ENCODE measurements at regions of chr17 and their contacts with region 1.

Region 1: DNA sequence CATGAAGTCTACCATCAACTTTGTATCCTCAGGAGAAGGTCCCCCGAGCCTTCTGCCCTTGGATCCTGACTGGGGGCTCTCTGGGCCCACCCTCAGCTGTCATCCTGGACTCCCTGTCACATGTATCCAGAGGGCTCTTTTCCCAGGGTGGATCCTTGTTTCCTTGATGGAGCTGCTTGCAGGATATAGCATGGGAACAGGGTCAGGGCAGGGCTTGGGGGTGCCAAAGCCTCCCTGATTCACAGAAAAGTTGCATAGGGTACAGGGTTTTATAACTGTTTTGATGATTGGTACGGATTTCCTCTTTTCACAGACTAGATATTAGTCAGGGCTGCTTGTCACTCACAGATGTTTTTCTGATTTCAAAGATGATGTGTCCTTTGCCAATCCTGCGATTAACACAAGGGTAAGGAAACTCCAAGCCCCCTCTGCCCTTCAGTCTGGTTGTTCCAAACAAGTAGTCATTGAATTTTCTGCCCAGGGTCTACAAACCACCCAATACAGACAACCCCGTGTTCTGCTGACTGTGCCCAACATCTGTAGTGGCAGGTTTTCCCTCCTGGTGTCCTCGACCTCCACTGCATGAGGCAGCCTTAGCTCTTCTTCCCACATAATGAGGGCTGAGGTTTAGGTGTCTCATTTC is 20.6 kb upstream of the SLC35G3 start:
- DNase-seq: peak in 8 of 9 experiments; percentile 16 to 74 (median 48)
- ATAC-seq: peak; percentile 50
- H3K4me3 ChIP-seq: peak overlapping the region; percentile 33 to 42
- H3K4me3 Mint-ChIP-seq: peak overlapping the region; percentile 67
- H3K27ac ChIP-seq: peak overlapping the region; percentile 77 to 84
- H3K27ac Mint-ChIP-seq: peak overlapping the region; percentile 98
- H3K4me1 ChIP-seq: peaks cover 90% of the 10 kb centered on the region
- H3K4me1 Mint-ChIP-seq: peaks cover 89% of the 10 kb centered on the region
- H3K27me3 ChIP-seq: no peaks in the 10 kb centered on the region
- H3K27me3 Mint-ChIP-seq: no peaks in the 10 kb centered on the region
- CTCF ChIP-seq: no peak

Region 2: GRCh38 chr17:35161281-35161761 is 53.4 kb before region 1 on chr17:
- CTCF ChIA-PET with region 1: interaction called, 4 read pairs
- POLR2A ChIA-PET with region 1: interaction called, 13 read pairs
- intact Hi-C with region 1: no loop called
- DNase-seq: peak in 8 of 9 experiments; percentile 6 to 81 (median 38)
- ATAC-seq: peak; percentile 52
- H3K4me3 ChIP-seq: peak overlapping the region; percentile 5 to 25
- H3K4me3 Mint-ChIP-seq: peak overlapping the region; percentile 70
- H3K27ac ChIP-seq: peak overlapping the region; percentile 40 to 77
- H3K27ac Mint-ChIP-seq: peak overlapping the region; percentile 95
- H3K4me1 ChIP-seq: peaks cover 53% of the 10 kb centered on the region
- H3K4me1 Mint-ChIP-seq: peaks cover 58% of the 10 kb centered on the region
- H3K27me3 ChIP-seq: no peaks in the 10 kb centered on the region
- H3K27me3 Mint-ChIP-seq: no peaks in the 10 kb centered on the region
- CTCF ChIP-seq: no peak

Region 3: DNA sequence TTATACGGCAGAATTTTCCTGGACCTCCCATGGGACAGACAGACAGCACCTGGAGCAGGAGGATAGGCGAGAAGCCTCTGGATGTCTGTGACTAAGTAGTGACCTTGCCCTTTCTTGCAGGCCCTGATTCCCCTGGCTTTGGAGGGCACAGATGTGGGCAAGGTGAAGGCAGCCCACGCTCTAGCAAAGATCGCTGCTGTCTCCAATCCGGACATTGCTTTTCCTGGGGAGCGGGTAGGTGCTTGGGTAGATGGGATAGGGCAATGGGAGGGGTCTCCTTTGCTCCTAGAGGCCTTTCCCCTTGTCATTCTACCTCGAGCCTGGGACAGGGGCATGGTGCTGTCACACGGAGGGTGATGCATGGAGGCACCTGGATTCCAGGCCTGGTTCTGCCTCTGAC is 37.9 kb before region 1 on chr17:
- CTCF ChIA-PET with region 1: interaction called, 3 read pairs
- POLR2A ChIA-PET with region 1: interaction called, 3 read pairs
- intact Hi-C with region 1: loop called in 1 of 2 experiments (anchors 1 kb)
- DNase-seq: no peak
- ATAC-seq: no peak
- H3K4me3 ChIP-seq: no peak overlapping the region
- H3K4me3 Mint-ChIP-seq: no peak overlapping the region
- H3K27ac ChIP-seq: peak overlapping the region in 1 of 2 experiments; percentile 60
- H3K27ac Mint-ChIP-seq: peak overlapping the region; percentile 96
- H3K4me1 ChIP-seq: peaks cover 57% of the 10 kb centered on the region
- H3K4me1 Mint-ChIP-seq: peaks cover 85% of the 10 kb centered on the region
- H3K27me3 ChIP-seq: no peaks in the 10 kb centered on the region
- H3K27me3 Mint-ChIP-seq: no peaks in the 10 kb centered on the region
- CTCF ChIP-seq: no peak

Region 4: GRCh38 chr17:35227546-35227945 is 12.8 kb after region 1 on chr17:
- CTCF ChIA-PET with region 1: no interaction called
- POLR2A ChIA-PET with region 1: interaction called, 18 read pairs
- intact Hi-C with region 1: no loop called
- DNase-seq: no peak
- ATAC-seq: no peak
- H3K4me3 ChIP-seq: no peak overlapping the region
- H3K4me3 Mint-ChIP-seq: no peak overlapping the region
- H3K27ac ChIP-seq: no peak overlapping the region
- H3K27ac Mint-ChIP-seq: peak overlapping the region; percentile 32
- H3K4me1 ChIP-seq: peaks cover 11% of the 10 kb centered on the region
- H3K4me1 Mint-ChIP-seq: peaks cover 59% of the 10 kb centered on the region
- H3K27me3 ChIP-seq: no peaks in the 10 kb centered on the region
- H3K27me3 Mint-ChIP-seq: no peaks in the 10 kb centered on the region
- CTCF ChIP-seq: no peak

Region 5: DNA sequence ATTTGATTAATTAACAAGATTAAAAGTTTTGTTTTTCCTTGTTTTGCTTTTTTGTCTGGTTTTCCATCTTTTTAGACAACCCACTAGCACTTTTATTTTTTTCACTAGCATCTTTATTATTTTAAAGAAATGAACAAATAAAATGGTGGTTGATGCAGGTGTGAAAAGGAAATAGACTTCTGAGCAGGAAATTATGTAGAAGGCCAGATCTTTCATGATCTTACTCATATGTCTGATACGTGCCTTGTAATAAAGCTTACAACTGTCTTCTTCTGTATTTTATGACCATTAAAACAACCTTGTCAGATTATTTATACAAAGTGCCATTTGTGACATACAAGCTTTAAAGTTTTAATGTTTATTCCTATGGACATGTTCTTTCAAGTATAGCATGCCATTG is 316.4 kb after region 1 on chr17:
- CTCF ChIA-PET with region 1: interaction called, 4 read pairs
- POLR2A ChIA-PET with region 1: interaction called, 10 read pairs
- intact Hi-C with region 1: no loop called
- DNase-seq: peak in 2 of 9 experiments; percentile 50 to 71
- ATAC-seq: peak; percentile 42
- H3K4me3 ChIP-seq: peak overlapping the region in 1 of 2 experiments; percentile 1
- H3K4me3 Mint-ChIP-seq: peak overlapping the region; percentile 27
- H3K27ac ChIP-seq: peak overlapping the region; percentile 42 to 66
- H3K27ac Mint-ChIP-seq: peak overlapping the region; percentile 96
- H3K4me1 ChIP-seq: peaks cover 57% of the 10 kb centered on the region
- H3K4me1 Mint-ChIP-seq: peaks cover 72% of the 10 kb centered on the region
- H3K27me3 ChIP-seq: no peaks in the 10 kb centered on the region
- H3K27me3 Mint-ChIP-seq: no peaks in the 10 kb centered on the region
- CTCF ChIP-seq: no peak

Region 6: GRCh38 chr17:35578197-35578928 is 363.6 kb after region 1 on chr17 and contains the start of gene PEX12:
- CTCF ChIA-PET with region 1: interaction called, 6 read pairs
- POLR2A ChIA-PET with region 1: interaction called, 11 read pairs
- intact Hi-C with region 1: no loop called
- DNase-seq: peak; percentile 70 to 96 (median 89)
- ATAC-seq: peak; percentile 93
- H3K4me3 ChIP-seq: peak within 1 kb of the TSS; percentile 69 to 88
- H3K4me3 Mint-ChIP-seq: peak within 1 kb of the TSS; percentile 93
- H3K27ac ChIP-seq: peak within 1 kb of the TSS; percentile 88 to 94
- H3K27ac Mint-ChIP-seq: peak within 1 kb of the TSS; percentile 98
- H3K4me1 ChIP-seq: peaks cover 18% of the 10 kb centered on the region
- H3K4me1 Mint-ChIP-seq: peaks cover 29% of the 10 kb centered on the region
- H3K27me3 ChIP-seq: no peaks in the 10 kb centered on the region
- H3K27me3 Mint-ChIP-seq: no peaks in the 10 kb centered on the region
- CTCF ChIP-seq: no peak
- total RNA-seq, gene PEX12: 2.7 to 3.2 TPM

Measured in CD8-positive, alpha-beta T cell (primary cell).